CD8-positive, alpha-beta T cell (primary cell): ENCODE measurements at regions of chr16 and their contacts with region 1.

Region 1: DNA sequence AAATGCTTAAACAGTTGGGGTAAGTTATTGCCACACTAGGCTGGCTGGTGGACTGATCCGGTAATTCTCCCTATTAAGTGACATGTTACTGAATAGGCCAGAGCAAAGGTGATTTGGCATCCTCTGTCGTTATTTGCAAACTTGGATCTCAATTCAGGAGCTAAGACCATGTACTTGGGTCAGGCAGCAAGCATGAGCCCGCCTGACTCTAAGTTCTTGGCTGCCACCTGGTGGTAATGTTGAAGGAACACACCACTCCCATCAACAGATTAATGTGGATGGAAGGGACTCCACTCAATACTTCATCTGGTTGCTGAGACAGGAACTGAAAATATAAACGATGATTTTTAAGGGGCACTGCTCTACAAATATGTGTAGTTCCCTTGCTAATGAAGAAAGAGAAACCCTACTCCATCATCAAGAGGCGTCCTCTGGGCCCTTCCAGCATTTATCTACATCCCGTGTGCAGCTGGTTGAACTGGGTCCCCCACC is 70.8 kb downstream of the EMP2 start:
- DNase-seq: peak; percentile 28 to 85 (median 67)
- ATAC-seq: peak; percentile 87
- H3K4me3 ChIP-seq: no peak overlapping the region
- H3K4me3 Mint-ChIP-seq: no peak overlapping the region
- H3K27ac ChIP-seq: no peak overlapping the region
- H3K27ac Mint-ChIP-seq: no peak overlapping the region
- H3K4me1 ChIP-seq: no peaks in the 10 kb centered on the region
- H3K4me1 Mint-ChIP-seq: peaks cover 2% of the 10 kb centered on the region
- H3K27me3 ChIP-seq: no peaks in the 10 kb centered on the region
- H3K27me3 Mint-ChIP-seq: no peaks in the 10 kb centered on the region
- CTCF ChIP-seq: peak; percentile 75

Region 2: DNA sequence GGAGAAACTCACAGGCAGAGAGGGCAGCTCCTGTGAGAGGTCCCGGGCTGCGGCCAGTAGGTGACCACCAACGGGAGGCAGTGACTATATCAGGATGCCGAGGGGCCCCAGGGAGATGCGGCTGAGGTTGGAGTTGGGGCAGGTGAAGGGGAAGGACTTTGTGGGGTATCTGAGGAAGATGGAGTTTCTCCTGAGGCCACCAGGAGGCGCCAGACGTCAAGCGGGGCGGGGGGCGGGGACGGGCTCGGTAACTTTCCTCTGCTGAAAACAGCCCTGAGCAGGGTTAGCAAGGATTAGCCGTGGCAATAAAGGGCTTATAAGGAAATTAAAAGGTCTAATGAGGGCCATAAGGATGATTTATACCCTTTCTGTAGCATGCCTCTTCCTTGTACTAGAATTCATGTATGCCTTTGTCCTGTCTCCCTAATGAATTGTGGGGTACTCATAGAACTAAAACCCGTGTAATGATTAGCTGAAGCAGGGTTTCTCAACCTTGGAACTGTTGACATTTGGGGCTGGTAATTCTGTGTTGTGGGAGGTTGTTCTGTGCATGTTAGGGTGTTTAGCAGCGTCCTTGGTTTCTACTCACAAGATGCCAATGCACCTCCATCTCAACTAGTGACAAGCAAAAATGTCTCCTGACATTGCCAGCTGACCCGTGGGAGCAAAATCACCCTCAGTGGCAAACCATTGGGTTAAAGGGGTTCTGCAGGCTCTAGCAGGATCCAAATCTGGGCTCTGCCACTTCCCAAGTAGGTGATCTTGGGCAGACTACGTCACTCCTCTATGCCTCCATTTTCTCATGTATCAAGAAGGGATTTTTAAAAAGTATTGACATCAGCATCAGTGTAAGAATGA is 252.6 kb before region 1 on chr16:
- CTCF ChIA-PET with region 1: interaction called, 34 read pairs
- POLR2A ChIA-PET with region 1: no interaction called
- intact Hi-C with region 1: loop called in 1 of 2 experiments (anchors 1 kb)
- DNase-seq: peak; percentile 9 to 69 (median 44)
- ATAC-seq: peak; percentile 69
- H3K4me3 ChIP-seq: no peak overlapping the region
- H3K4me3 Mint-ChIP-seq: no peak overlapping the region
- H3K27ac ChIP-seq: no peak overlapping the region
- H3K27ac Mint-ChIP-seq: no peak overlapping the region
- H3K4me1 ChIP-seq: peaks cover 4% of the 10 kb centered on the region
- H3K4me1 Mint-ChIP-seq: peaks cover 7% of the 10 kb centered on the region
- H3K27me3 ChIP-seq: no peaks in the 10 kb centered on the region
- H3K27me3 Mint-ChIP-seq: no peaks in the 10 kb centered on the region
- CTCF ChIP-seq: peak; percentile 81

Region 3: DNA sequence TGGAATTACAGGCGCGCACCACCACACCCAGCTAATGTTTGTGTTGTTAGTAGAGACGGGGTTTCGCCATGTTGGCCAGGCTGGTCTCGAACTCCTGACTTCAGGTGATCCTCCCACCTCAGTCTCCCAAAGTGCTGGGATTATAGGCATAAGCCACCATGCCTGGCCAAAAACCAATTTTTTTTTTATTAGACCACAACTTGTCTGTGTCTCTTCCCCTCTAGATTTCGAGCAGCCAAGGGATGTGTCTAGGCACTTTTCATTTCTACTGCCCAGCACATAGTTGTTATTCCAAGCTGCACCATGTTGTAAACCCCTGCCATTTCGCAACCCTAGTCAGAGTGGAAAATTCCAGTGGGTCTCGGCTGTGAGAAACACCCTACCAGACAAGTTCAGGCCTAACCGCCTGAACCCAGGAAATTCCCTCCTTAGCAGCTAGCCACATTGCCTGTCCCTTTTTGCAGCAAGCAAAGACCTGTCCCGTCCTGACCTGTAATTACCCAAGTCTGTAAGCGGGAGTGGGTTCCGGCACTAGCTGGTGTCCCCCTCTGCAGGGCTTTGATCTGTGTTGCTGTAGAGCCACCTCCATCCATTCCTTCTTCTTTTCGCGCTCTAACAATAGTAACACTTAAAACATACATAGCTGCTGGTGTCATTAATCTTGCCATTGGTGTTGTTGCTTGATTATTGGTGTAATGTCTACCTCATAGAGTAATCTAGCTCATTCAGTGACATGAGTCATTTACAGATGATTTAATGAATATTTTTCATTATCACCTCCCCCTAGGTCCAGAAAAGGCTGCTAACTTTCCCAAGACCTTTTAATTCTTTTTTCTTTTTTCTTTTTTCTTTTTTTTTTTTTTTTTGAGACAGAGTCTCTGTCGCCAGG is 201.0 kb before region 1 on chr16:
- CTCF ChIA-PET with region 1: interaction called, 147 read pairs
- POLR2A ChIA-PET with region 1: no interaction called
- intact Hi-C with region 1: no loop called
- DNase-seq: no peak
- ATAC-seq: no peak
- H3K4me3 ChIP-seq: no peak overlapping the region
- H3K4me3 Mint-ChIP-seq: no peak overlapping the region
- H3K27ac ChIP-seq: no peak overlapping the region
- H3K27ac Mint-ChIP-seq: no peak overlapping the region
- H3K4me1 ChIP-seq: no peaks in the 10 kb centered on the region
- H3K4me1 Mint-ChIP-seq: no peaks in the 10 kb centered on the region
- H3K27me3 ChIP-seq: no peaks in the 10 kb centered on the region
- H3K27me3 Mint-ChIP-seq: no peaks in the 10 kb centered on the region
- CTCF ChIP-seq: no peak

Region 4: DNA sequence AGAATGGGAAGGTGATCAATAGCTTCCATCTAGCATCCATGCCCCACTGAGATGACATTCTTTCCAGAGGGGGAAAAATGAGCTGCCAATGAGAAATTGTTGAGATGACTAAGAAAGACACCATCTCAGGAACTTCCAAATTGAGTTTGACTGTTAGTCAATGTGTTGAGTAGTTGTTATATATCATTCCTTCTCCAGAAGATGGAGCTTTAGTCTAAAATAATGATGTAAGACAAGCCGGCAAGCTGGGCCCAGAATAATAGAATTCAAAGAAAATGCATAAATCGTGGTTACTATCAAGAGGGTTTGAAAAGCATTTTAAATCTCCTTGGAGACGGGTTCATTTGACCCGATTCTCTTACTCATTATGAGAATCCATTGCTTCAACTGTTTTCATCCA is 194.8 kb before region 1 on chr16:
- CTCF ChIA-PET with region 1: interaction called, 147 read pairs
- POLR2A ChIA-PET with region 1: interaction called, 8 read pairs
- intact Hi-C with region 1: loop called (anchors 1 kb)
- DNase-seq: peak in 2 of 9 experiments; percentile 47 to 61
- ATAC-seq: peak; percentile 46
- H3K4me3 ChIP-seq: no peak overlapping the region
- H3K4me3 Mint-ChIP-seq: no peak overlapping the region
- H3K27ac ChIP-seq: no peak overlapping the region
- H3K27ac Mint-ChIP-seq: no peak overlapping the region
- H3K4me1 ChIP-seq: peaks cover 5% of the 10 kb centered on the region
- H3K4me1 Mint-ChIP-seq: peaks cover 22% of the 10 kb centered on the region
- H3K27me3 ChIP-seq: no peaks in the 10 kb centered on the region
- H3K27me3 Mint-ChIP-seq: no peaks in the 10 kb centered on the region
- CTCF ChIP-seq: peak; percentile 68

Region 5: GRCh38 chr16:10566589-10566988 is 57.0 kb after region 1 on chr16:
- CTCF ChIA-PET with region 1: no interaction called
- POLR2A ChIA-PET with region 1: no interaction called
- intact Hi-C with region 1: loop called in 1 of 2 experiments (anchors 10 kb)
- DNase-seq: no peak
- ATAC-seq: no peak
- H3K4me3 ChIP-seq: no peak overlapping the region
- H3K4me3 Mint-ChIP-seq: no peak overlapping the region
- H3K27ac ChIP-seq: no peak overlapping the region
- H3K27ac Mint-ChIP-seq: no peak overlapping the region
- H3K4me1 ChIP-seq: no peaks in the 10 kb centered on the region
- H3K4me1 Mint-ChIP-seq: no peaks in the 10 kb centered on the region
- H3K27me3 ChIP-seq: no peaks in the 10 kb centered on the region
- H3K27me3 Mint-ChIP-seq: peaks cover 13% of the 10 kb centered on the region
- CTCF ChIP-seq: no peak

Region 6: GRCh38 chr16:10731790-10732189 is 222.2 kb after region 1 on chr16:
- CTCF ChIA-PET with region 1: interaction called, 108 read pairs
- POLR2A ChIA-PET with region 1: interaction called, 3 read pairs
- intact Hi-C with region 1: no loop called
- DNase-seq: no peak
- ATAC-seq: no peak
- H3K4me3 ChIP-seq: no peak overlapping the region
- H3K4me3 Mint-ChIP-seq: no peak overlapping the region
- H3K27ac ChIP-seq: no peak overlapping the region
- H3K27ac Mint-ChIP-seq: no peak overlapping the region
- H3K4me1 ChIP-seq: no peaks in the 10 kb centered on the region
- H3K4me1 Mint-ChIP-seq: no peaks in the 10 kb centered on the region
- H3K27me3 ChIP-seq: no peaks in the 10 kb centered on the region
- H3K27me3 Mint-ChIP-seq: no peaks in the 10 kb centered on the region
- CTCF ChIP-seq: no peak

Region 7: DNA sequence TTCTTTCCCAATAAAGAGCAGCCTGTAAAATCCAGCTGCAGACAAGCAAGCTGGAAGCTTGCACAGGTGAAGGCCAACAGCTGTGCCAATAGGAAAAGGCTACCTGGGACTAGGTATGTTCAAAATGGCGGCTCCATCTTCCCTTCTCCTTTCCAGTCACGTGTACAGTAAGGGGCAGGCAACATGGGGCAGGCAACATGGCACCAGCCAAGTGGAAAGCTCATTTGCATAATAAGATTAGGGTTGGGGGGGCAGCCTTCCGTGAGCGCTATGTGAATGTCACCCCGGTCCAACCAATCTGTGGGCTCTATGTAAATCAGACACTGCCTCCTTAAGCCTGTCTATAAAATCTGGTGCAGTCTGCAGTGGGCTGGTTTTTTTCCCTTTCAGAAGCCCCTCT is 277.7 kb after region 1 on chr16:
- CTCF ChIA-PET with region 1: no interaction called
- POLR2A ChIA-PET with region 1: no interaction called
- intact Hi-C with region 1: no loop called
- DNase-seq: no peak
- ATAC-seq: no peak
- H3K4me3 ChIP-seq: no peak overlapping the region
- H3K4me3 Mint-ChIP-seq: no peak overlapping the region
- H3K27ac ChIP-seq: no peak overlapping the region
- H3K27ac Mint-ChIP-seq: no peak overlapping the region
- H3K4me1 ChIP-seq: no peaks in the 10 kb centered on the region
- H3K4me1 Mint-ChIP-seq: no peaks in the 10 kb centered on the region
- H3K27me3 ChIP-seq: no peaks in the 10 kb centered on the region
- H3K27me3 Mint-ChIP-seq: no peaks in the 10 kb centered on the region
- CTCF ChIP-seq: no peak